ENCODE measurements at regions of chr10 and their contacts with region 1.

Region 1: DNA sequence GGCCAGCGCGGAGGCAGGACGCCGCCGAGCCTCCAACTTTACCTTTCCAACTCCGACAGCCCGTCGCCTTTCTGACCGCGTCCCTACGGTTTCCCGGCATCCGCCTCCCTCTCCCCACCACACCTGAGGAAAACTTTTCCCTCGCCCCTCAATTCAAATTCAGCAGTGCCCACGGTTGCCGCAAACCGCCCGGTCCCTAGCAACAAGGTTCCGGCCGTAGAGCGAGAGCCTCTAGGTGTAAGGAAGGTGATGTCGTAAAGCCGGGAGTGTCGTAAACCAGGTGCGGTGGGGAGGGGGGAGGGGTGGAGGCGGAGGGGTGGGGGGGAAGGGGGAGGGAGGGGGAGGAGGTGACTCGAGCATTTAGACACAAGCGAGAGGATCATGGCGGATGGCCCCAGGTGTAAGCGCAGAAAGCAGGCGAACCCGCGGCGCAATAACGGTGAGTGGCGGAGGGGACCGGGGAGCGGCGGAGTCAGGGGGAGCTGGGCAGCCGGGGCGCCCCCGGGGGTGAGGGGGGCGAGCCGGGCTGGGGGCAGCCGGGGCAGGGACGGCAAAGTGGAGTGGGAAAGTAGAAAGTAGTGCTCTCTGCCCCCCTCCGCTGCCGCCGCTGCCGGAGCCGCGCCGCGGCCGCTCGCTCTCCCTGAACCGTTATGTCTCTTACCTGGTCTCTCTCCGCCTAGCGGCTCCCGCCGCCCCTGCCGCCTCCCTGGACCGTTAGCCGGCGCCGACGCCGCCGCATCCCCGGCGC is at the start of gene ZEB1:
- DNase-seq: peak; percentile 96
- H3K4me3 ChIP-seq: peak within 1 kb of the TSS; percentile 78 to 98 (median 88)
- H3K27ac ChIP-seq: peak within 1 kb of the TSS; percentile 97 to 99 (median 98)
- H3K4me1 ChIP-seq: peaks cover 0 to 31% (median 26%) of the 10 kb centered on the region in 4 donors
- H3K27me3 ChIP-seq: no peaks in the 10 kb centered on the region
- CTCF ChIP-seq: peak; percentile 30 to 61 (median 45)
- EP300 ChIP-seq: peak in 1 of 4 donors; percentile 7
- POLR2A ChIP-seq: peak in 1 of 2 donors; percentile 14
- total RNA-seq, gene ZEB1: 215 to 255 (median 251) TPM

Region 2: GRCh38 chr10:30783939-30784500 is 535.0 kb before region 1 on chr10:
- intact Hi-C with region 1: loop called (anchors 2 kb)
- DNase-seq: peak; percentile 94
- H3K4me3 ChIP-seq: peak overlapping the region; percentile 47 to 74 (median 61)
- H3K27ac ChIP-seq: peak overlapping the region; percentile 92 to 99 (median 93)
- H3K4me1 ChIP-seq: peaks cover 0 to 47% (median 38%) of the 10 kb centered on the region in 4 donors
- H3K27me3 ChIP-seq: no peaks in the 10 kb centered on the region
- CTCF ChIP-seq: peak; percentile 91 to 94 (median 93)
- EP300 ChIP-seq: no peak
- POLR2A ChIP-seq: no peak

Region 3: GRCh38 chr10:31490858-31491504 is 172.0 kb after region 1 on chr10:
- intact Hi-C with region 1: loop called (anchors 5 kb)
- DNase-seq: no peak
- H3K4me3 ChIP-seq: no peak overlapping the region
- H3K27ac ChIP-seq: peak overlapping the region in 2 of 4 donors; percentile 27 to 38
- H3K4me1 ChIP-seq: peaks cover 0 to 19% (median 0%) of the 10 kb centered on the region in 4 donors
- H3K27me3 ChIP-seq: no peaks in the 10 kb centered on the region
- CTCF ChIP-seq: peak in 2 of 4 experiments; percentile 56 to 59
- EP300 ChIP-seq: no peak
- POLR2A ChIP-seq: no peak

Region 4: GRCh38 chr10:31759799-31760626 is 441.0 kb after region 1 on chr10:
- intact Hi-C with region 1: loop called (anchors 5 kb)
- DNase-seq: peak; percentile 99
- H3K4me3 ChIP-seq: peak overlapping the region; percentile 56 to 96 (median 80)
- H3K27ac ChIP-seq: peak overlapping the region; percentile 93 to 99 (median 94)
- H3K4me1 ChIP-seq: peaks cover 0 to 49% (median 36%) of the 10 kb centered on the region in 4 donors
- H3K27me3 ChIP-seq: no peaks in the 10 kb centered on the region
- CTCF ChIP-seq: no peak
- EP300 ChIP-seq: no peak
- POLR2A ChIP-seq: peak; percentile 91 to 92

Measured in sigmoid colon (tissue), 7 donors.